Testis (tissue), 5 donors: ENCODE measurements at regions of chrX and their contacts with region 1.

Region 1: GRCh38 chrX:118644378-118644777 is 83.0 kb upstream of the IL13RA1 start:
- DNase-seq: no peak
- H3K4me3 ChIP-seq: no peak overlapping the region
- H3K27ac ChIP-seq: no peak overlapping the region
- H3K4me1 ChIP-seq: no peaks in the 10 kb centered on the region
- H3K27me3 ChIP-seq: no peaks in the 10 kb centered on the region
- CTCF ChIP-seq: peak in 1 of 3 experiments; percentile 27
- POLR2A ChIP-seq: no peak

Region 2: GRCh38 chrX:118566359-118566758 is 78.0 kb before region 1 on chrX:
- intact Hi-C with region 1: no loop called
- DNase-seq: no peak
- H3K4me3 ChIP-seq: no peak overlapping the region
- H3K27ac ChIP-seq: no peak overlapping the region
- H3K4me1 ChIP-seq: no peaks in the 10 kb centered on the region
- H3K27me3 ChIP-seq: no peaks in the 10 kb centered on the region
- CTCF ChIP-seq: no peak
- POLR2A ChIP-seq: no peak

Region 3: GRCh38 chrX:118807151-118808017 is 163.0 kb after region 1 on chrX:
- intact Hi-C with region 1: loop called (anchors 10 kb)
- DNase-seq: peak; percentile 23
- H3K4me3 ChIP-seq: no peak overlapping the region
- H3K27ac ChIP-seq: no peak overlapping the region
- H3K4me1 ChIP-seq: no peaks in the 10 kb centered on the region
- H3K27me3 ChIP-seq: no peaks in the 10 kb centered on the region
- CTCF ChIP-seq: peak; percentile 25 to 56 (median 47)
- POLR2A ChIP-seq: no peak